ENCODE measurements at regions of chr22 and their contacts with region 1.

Region 1: DNA sequence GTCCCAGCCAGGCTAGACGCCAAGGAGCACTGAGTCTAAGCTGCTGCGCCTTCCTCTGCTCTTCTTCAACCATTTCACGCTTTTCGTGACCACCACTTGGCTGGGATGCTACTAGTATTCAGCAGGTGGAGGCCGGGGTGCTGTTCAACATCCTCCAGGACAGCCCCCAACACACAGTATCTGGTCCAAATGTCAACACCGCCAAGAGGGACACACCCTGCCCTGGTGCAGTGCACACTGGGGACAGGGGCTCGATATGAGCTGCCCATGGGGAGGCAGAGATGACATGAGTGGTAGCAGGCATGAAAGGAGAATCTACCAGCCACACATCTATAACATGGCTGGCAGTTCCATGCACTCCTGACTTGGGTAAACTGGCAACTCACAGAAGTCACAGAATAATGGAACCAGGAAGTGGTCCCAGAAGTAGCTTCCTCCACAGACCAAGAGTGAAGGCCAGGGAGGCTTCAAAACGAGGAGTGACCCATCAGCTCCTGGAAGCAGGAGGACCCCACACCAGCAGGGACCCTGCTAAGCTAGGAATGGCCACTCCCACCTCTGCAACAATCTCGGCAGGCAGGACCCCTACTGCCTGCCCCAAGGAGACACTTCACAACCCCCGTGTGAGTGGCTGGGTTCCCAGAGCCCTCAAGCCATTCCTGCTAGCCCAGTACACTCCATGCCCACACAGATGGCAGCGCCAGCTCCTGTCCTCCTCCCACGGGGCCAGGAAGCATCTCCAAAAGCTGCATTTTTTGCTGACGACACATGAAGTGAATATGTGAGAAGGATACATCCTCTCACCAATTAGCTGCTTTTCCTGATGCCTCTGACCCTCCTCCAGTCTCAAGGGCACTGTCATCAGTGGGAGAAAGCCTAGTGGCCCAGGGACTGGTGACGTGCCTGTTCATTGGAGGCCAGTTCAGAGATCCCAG is 78.8 kb downstream of the DGCR2 start:
- DNase-seq: peak in 4 of 7 donors; percentile 6 to 56 (median 25)
- H3K4me3 ChIP-seq: no peak overlapping the region
- H3K27ac ChIP-seq: peak overlapping the region in 1 of 5 donors; percentile 39
- H3K4me1 ChIP-seq: peaks cover 0 to 9% of the 10 kb centered on the region in 2 donors
- H3K27me3 ChIP-seq: no peaks in the 10 kb centered on the region
- CTCF ChIP-seq: no peak
- POLR2A ChIP-seq: no peak

Region 2: DNA sequence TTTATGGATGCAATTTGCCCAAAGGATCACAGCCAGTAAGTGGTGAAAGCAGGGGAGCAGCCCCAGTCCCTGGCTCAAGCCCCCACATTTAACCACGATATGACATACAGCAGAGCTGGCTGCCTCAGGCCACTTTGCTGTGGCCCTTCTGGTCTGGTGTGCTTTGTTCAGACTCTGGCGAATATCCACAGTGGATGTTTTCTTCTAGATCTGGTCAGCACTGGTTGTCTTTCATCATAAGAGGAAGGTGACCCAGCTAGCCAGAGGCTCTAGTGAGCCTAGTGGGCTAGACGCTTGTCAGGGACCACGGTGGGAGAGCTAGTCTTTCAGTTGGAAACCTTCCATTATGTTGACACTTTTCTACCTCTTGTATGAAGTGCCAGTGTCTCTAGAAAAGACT is 36.3 kb after region 1 on chr22:
- intact Hi-C with region 1: no loop called
- DNase-seq: no peak
- H3K4me3 ChIP-seq: no peak overlapping the region
- H3K27ac ChIP-seq: no peak overlapping the region
- H3K4me1 ChIP-seq: no peaks in the 10 kb centered on the region
- H3K27me3 ChIP-seq: no peaks in the 10 kb centered on the region
- CTCF ChIP-seq: no peak
- POLR2A ChIP-seq: no peak

Region 3: GRCh38 chr22:19109198-19110067 is 66.0 kb after region 1 on chr22:
- intact Hi-C with region 1: loop called in 1 of 2 experiments (anchors 10 kb)
- DNase-seq: peak in 6 of 7 donors; percentile 52 to 77 (median 54)
- H3K4me3 ChIP-seq: no peak overlapping the region
- H3K27ac ChIP-seq: peak overlapping the region in 4 of 5 donors; percentile 7 to 73 (median 38)
- H3K4me1 ChIP-seq: peaks cover 20 to 39% of the 10 kb centered on the region in 2 donors
- H3K27me3 ChIP-seq: no peaks in the 10 kb centered on the region
- CTCF ChIP-seq: no peak
- POLR2A ChIP-seq: no peak